Naive thymus-derived CD4-positive, alpha-beta T cell (primary cell): ENCODE measurements at regions of chr7 and their contacts with region 1.

Region 1: GRCh38 chr7:99616359-99617191 is at the start of gene ZSCAN25:
- DNase-seq: peak; percentile 65 to 88 (median 85)
- ATAC-seq: peak; percentile 99
- H3K4me3 ChIP-seq: peak within 1 kb of the TSS; percentile 83
- H3K4me3 Mint-ChIP-seq: peak within 1 kb of the TSS; percentile 94 to 99 (median 98)
- H3K27ac ChIP-seq: peak within 1 kb of the TSS; percentile 90
- H3K27ac Mint-ChIP-seq: peak within 1 kb of the TSS; percentile 88 to 99 (median 97)
- H3K4me1 ChIP-seq: peaks cover 12 to 14% of the 10 kb centered on the region in 2 donors
- H3K4me1 Mint-ChIP-seq: peaks cover 30 to 55% (median 48%) of the 10 kb centered on the region in 7 donors
- H3K27me3 ChIP-seq: no peaks in the 10 kb centered on the region
- H3K27me3 Mint-ChIP-seq: peaks cover 0 to 4% (median 0%) of the 10 kb centered on the region in 5 donors
- total RNA-seq, gene ZSCAN25: 33.9 to 51.6 (median 43.8) TPM

Region 2: DNA sequence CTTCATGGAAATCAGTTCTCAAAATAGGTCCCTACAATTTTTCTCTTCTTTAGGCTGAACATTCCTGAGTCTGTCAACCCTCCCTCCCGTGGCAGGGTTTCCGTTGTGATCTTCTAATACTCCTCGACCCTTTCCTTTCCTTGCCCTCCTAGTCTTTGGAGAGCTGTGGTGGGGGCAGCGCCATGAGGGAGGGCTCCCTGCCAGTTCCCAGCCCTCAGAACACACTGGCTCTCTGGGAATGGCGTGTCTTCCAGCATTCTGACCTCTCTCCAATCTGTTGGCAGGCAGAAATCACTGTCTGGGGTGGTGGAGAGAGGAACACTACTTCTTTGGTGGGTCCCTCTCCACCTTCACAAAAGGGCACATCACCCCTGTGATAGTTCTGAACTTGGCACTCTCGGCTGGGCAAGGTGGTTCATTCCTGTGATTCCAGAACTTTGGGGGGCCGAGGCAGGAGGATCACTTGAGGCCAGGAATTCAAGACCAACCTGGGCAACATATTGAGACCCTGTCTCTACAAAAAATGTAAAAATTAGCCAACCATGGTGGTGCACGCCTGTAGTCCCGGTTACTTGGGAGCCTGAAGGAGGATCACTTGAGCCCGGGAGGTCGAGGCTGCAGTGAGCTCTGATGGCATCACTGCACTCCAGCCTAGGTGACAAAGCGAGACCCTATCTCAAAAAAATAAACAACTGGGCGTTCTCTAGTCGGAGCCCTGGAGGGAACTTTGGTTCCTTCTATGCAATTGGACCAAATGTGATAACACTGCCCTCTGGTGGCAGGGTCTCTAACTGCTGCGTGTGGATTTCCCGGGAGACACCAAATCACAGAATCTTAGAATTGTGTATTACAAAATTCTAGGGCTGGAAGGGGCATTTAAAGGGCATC is 304.0 kb before region 1 on chr7:
- CTCF ChIA-PET with region 1: no interaction called
- POLR2A ChIA-PET with region 1: no interaction called
- intact Hi-C with region 1: no loop called
- DNase-seq: peak; percentile 41 to 75 (median 61)
- ATAC-seq: peak; percentile 93
- H3K4me3 ChIP-seq: no peak overlapping the region
- H3K4me3 Mint-ChIP-seq: peak overlapping the region in 4 of 10 donors; percentile 20 to 71 (median 54)
- H3K27ac ChIP-seq: no peak overlapping the region
- H3K27ac Mint-ChIP-seq: peak overlapping the region in 1 of 9 donors; percentile 15
- H3K4me1 ChIP-seq: peaks cover 0 to 3% of the 10 kb centered on the region in 2 donors
- H3K4me1 Mint-ChIP-seq: peaks cover 4 to 20% (median 4%) of the 10 kb centered on the region in 7 donors
- H3K27me3 ChIP-seq: no peaks in the 10 kb centered on the region
- H3K27me3 Mint-ChIP-seq: peaks cover 0 to 3% (median 0%) of the 10 kb centered on the region in 5 donors

Region 3: GRCh38 chr7:99465421-99465768 is 151.2 kb before region 1 on chr7:
- CTCF ChIA-PET with region 1: no interaction called
- POLR2A ChIA-PET with region 1: no interaction called
- intact Hi-C with region 1: loop called in 1 of 2 experiments (anchors 1 kb)
- DNase-seq: no peak
- ATAC-seq: peak; percentile 2
- H3K4me3 ChIP-seq: peak overlapping the region; percentile 97
- H3K4me3 Mint-ChIP-seq: peak overlapping the region; percentile 82 to 98 (median 96)
- H3K27ac ChIP-seq: peak overlapping the region; percentile 90
- H3K27ac Mint-ChIP-seq: peak overlapping the region; percentile 90 to 98 (median 96)
- H3K4me1 ChIP-seq: peaks cover 10 to 11% of the 10 kb centered on the region in 2 donors
- H3K4me1 Mint-ChIP-seq: peaks cover 19 to 52% (median 31%) of the 10 kb centered on the region in 7 donors
- H3K27me3 ChIP-seq: no peaks in the 10 kb centered on the region
- H3K27me3 Mint-ChIP-seq: peaks cover 0 to 2% (median 0%) of the 10 kb centered on the region in 5 donors

Region 4: GRCh38 chr7:99558306-99559174 is 58.0 kb before region 1 on chr7 and contains the start of gene ZNF655:
- CTCF ChIA-PET with region 1: interaction called, 3 read pairs
- POLR2A ChIA-PET with region 1: interaction called, 38 read pairs
- intact Hi-C with region 1: loop called in 1 of 2 experiments (anchors 1 kb)
- DNase-seq: peak; percentile 85 to 96 (median 93)
- ATAC-seq: peak; percentile 89
- H3K4me3 ChIP-seq: peak within 1 kb of the TSS; percentile 85
- H3K4me3 Mint-ChIP-seq: peak within 1 kb of the TSS; percentile 94 to 100 (median 97)
- H3K27ac ChIP-seq: peak within 1 kb of the TSS; percentile 99
- H3K27ac Mint-ChIP-seq: peak within 1 kb of the TSS; percentile 95 to 100 (median 99)
- H3K4me1 ChIP-seq: peaks cover 24 to 25% of the 10 kb centered on the region in 2 donors
- H3K4me1 Mint-ChIP-seq: peaks cover 32 to 69% (median 51%) of the 10 kb centered on the region in 7 donors
- H3K27me3 ChIP-seq: no peaks in the 10 kb centered on the region
- H3K27me3 Mint-ChIP-seq: no peaks in the 10 kb centered on the region
- total RNA-seq, gene ZNF655: 110 to 165 (median 157) TPM

Region 5: DNA sequence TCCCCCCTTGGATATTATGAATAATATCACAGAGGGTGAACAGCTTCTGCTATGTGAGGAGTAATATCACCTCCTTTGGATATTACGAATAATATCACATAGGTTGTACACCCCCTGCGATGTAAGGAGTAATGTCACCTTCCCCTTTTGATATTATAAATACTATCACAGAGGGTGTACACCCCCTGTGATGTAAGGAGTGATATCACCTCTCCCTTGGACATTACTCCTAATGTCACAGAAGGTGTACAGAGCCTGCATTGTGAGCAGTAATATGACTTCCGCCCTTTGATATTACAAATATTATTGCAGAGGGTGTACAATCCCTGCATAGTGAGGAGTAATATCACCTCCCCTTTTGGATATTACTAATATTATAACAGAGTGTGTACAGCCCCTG is 27.7 kb before region 1 on chr7:
- CTCF ChIA-PET with region 1: no interaction called
- POLR2A ChIA-PET with region 1: no interaction called
- intact Hi-C with region 1: no loop called
- DNase-seq: no peak
- ATAC-seq: no peak
- H3K4me3 ChIP-seq: no peak overlapping the region
- H3K4me3 Mint-ChIP-seq: no peak overlapping the region
- H3K27ac ChIP-seq: no peak overlapping the region
- H3K27ac Mint-ChIP-seq: no peak overlapping the region
- H3K4me1 ChIP-seq: no peaks in the 10 kb centered on the region
- H3K4me1 Mint-ChIP-seq: no peaks in the 10 kb centered on the region
- H3K27me3 ChIP-seq: no peaks in the 10 kb centered on the region
- H3K27me3 Mint-ChIP-seq: no peaks in the 10 kb centered on the region

Region 6: DNA sequence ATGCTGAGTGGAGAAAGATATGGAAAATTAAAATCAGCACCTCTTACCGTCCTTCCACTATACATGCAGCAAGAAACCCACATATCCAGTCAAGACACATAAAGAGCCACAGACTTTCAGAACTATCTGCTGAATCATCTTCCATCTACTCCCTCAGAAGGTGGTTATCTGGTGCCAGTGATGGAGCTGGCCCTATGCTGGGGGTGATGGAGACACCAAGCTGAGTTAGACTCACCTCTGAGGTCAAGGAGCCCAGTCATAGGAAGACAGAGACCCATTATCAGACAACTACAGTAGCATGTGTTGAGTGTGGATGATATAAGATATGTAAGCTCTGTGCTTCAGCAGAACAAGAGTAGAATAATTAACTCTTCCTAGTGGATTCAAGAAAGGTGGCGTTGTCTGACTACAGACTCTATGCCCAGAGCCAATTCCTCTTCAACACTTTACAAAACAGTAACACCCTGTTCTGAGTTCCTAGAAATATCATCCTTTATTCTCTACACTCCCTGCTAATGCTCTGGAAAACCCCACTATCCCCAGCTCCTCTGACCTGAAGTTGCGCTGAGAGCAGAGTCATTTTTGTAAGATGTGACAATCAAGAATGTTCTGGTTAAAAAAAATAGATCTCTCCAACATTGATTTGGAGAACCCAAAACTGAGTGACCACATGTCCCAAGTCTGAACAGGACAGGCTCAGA is 48.9 kb after region 1 on chr7:
- CTCF ChIA-PET with region 1: no interaction called
- POLR2A ChIA-PET with region 1: no interaction called
- intact Hi-C with region 1: loop called in 1 of 2 experiments (anchors 5 kb)
- DNase-seq: no peak
- ATAC-seq: no peak
- H3K4me3 ChIP-seq: no peak overlapping the region
- H3K4me3 Mint-ChIP-seq: no peak overlapping the region
- H3K27ac ChIP-seq: no peak overlapping the region
- H3K27ac Mint-ChIP-seq: peak overlapping the region in 2 of 9 donors; percentile 16 to 66
- H3K4me1 ChIP-seq: no peaks in the 10 kb centered on the region
- H3K4me1 Mint-ChIP-seq: peaks cover 0 to 2% (median 0%) of the 10 kb centered on the region in 7 donors
- H3K27me3 ChIP-seq: no peaks in the 10 kb centered on the region
- H3K27me3 Mint-ChIP-seq: no peaks in the 10 kb centered on the region

Region 7: DNA sequence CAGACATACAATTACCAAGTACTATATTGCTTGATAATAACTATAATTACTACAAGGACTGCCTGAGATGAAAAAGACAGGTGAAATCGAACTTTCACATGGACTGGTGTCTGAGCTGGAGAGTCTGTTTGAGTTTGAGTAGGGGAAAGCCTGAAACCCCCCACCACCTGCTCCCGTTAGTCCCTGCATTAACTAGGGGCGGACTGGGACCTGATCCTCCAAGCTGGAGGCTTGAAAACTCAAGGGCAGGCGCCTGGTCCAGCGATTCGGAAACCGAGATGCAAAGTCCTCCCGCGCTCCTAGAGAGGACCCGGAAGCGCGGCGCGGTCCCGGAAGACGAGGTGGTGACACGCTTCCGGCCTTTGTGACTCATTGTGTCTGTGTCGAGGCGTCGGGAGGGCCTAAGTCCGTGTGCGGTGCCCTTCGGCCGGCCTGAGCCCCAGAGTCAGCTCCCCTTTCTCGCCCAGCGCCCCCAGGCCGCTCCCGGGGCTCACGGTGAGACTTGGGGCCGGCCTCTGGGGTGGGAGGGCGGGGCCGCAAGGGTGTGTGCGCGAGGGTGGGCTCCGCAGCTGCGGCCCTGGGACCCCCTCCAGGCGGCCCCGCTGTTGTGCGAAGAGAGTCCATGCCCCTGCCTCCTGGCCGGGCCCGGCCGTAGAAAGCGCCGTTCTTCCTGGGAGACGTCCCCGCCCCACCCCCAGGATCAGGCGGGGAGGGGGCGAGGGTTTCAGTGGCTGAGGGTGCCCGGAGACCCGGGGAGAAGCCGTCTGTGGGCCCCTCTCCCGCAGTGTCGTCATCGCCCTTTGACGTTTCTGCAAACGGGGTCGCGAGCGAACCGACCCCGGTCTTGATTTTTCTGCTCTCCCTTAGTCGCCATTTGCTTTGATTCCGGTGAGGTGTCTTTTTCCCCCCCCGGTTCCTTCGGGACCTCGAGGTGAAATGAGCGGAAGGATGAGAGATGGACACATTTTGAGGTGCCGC is 398.9 kb after region 1 on chr7 and contains the start of gene ZKSCAN1:
- CTCF ChIA-PET with region 1: no interaction called
- POLR2A ChIA-PET with region 1: interaction called, 4 read pairs
- intact Hi-C with region 1: loop called in 1 of 2 experiments (anchors 1 kb)
- DNase-seq: peak; percentile 68 to 86 (median 81)
- ATAC-seq: peak; percentile 99
- H3K4me3 ChIP-seq: peak within 1 kb of the TSS; percentile 51
- H3K4me3 Mint-ChIP-seq: peak within 1 kb of the TSS; percentile 92 to 98 (median 96)
- H3K27ac ChIP-seq: peak within 1 kb of the TSS; percentile 98
- H3K27ac Mint-ChIP-seq: peak within 1 kb of the TSS; percentile 91 to 98 (median 97)
- H3K4me1 ChIP-seq: peaks cover 19 to 22% of the 10 kb centered on the region in 2 donors
- H3K4me1 Mint-ChIP-seq: peaks cover 23 to 57% (median 44%) of the 10 kb centered on the region in 7 donors
- H3K27me3 ChIP-seq: no peaks in the 10 kb centered on the region
- H3K27me3 Mint-ChIP-seq: peaks cover 0 to 3% (median 0%) of the 10 kb centered on the region in 5 donors
- total RNA-seq, gene ZKSCAN1: 54.0 to 103 (median 70.1) TPM